AG04450 (cell line): ENCODE measurements at regions of chr2 and their contacts with region 1.

Region 1: DNA sequence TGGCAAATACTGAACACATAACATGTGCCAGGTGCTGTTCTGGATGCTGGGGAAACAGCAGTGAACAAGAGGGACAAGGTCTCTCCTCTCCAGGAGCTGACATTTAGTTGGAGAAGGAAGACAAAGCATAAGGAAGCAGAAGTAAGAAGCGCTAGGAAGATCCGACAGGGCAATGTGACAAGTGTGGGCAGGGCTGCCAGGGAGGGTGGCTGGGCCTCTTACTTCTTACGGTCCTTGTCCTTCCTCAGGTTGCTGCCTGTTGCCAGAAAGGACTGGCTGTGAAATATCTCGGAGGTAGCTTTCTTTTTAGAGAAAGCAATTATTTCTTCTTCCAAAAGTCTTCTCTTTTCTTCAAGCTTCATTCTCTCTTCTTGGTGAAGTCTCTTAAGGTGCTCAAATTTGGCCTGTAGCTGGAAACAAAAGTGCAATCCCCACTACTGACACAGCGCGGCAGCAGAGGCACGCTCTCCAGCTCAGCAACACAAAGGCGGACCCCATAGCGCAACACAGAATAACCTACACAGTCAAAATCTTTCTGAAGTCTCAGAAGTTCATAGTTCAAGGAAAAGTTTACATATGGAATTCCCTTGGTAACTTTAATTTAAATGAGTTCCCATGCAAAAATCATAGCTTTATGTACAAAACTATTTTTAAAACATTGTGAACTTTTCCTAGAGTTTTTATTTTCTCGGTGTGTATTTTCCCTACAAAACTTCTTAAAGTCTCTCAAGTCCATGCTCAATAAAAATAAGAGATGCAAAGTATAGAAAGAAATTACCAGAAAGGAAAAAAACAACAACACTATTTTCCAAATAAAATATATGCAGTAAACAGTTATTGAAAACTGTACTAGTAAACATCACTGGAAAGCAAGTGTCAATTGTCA is 67.7 kb downstream of the SEPTIN10 start:
- DNase-seq: peak; percentile 27
- H3K4me3 ChIP-seq: no peak overlapping the region
- H3K27ac ChIP-seq: no peak overlapping the region
- H3K27me3 ChIP-seq: no peaks in the 10 kb centered on the region
- CTCF ChIP-seq: peak; percentile 97

Region 2: GRCh38 chr2:109339519-109339966 is 206.5 kb before region 1 on chr2:
- CTCF ChIA-PET with region 1: no interaction called
- POLR2A ChIA-PET with region 1: no interaction called
- DNase-seq: peak; percentile 63
- H3K4me3 ChIP-seq: no peak overlapping the region
- H3K27ac ChIP-seq: peak overlapping the region; percentile 75
- H3K27me3 ChIP-seq: no peaks in the 10 kb centered on the region
- CTCF ChIP-seq: no peak

Region 3: GRCh38 chr2:109386004-109386695 is 159.9 kb before region 1 on chr2:
- CTCF ChIA-PET with region 1: no interaction called
- POLR2A ChIA-PET with region 1: no interaction called
- DNase-seq: no peak
- H3K4me3 ChIP-seq: no peak overlapping the region
- H3K27ac ChIP-seq: no peak overlapping the region
- H3K27me3 ChIP-seq: no peaks in the 10 kb centered on the region
- CTCF ChIP-seq: no peak

Region 4: DNA sequence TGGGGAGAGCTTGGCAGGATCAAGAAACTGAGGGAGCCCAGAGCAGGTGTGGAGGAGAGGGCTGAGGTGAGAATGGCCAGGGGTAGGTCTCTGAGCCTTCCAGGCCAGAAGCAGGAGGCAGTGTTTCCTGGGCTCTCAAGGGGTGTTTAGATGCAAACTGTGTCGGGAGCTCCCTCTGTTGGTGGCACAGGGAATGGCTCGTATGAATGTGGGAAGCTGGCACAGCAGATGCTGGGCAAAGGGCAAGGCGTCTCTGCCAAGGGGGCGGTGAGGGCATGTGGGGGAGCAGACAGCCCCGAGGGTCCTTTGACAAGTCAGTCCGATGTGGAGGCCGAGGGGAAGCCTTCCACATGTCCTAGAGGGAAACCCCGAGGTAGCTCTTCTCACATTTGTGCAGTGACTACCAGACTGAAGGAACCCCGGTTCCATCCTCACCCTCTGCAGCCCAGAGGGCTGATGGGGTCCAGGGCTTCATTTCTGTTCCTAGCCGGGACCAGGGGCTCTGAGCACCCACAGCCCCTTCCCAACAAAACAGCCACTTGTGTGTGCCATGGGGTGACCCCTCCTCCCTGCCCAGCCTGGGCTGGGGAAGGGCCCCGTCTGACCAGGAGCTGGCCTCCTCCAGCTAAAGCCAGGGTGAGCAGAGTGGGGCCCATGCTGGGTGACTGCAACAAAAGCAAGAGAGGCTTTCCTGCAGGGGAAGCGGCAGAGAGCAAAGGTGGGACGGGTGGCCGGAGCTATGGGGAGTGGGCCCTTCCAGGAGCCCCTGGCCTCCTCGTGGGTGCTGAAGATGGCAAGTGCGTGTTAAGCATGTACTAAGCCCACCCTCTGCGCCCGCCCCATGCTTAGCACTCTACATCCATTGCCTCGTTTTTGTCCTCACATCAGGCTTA is 35.7 kb before region 1 on chr2:
- CTCF ChIA-PET with region 1: interaction called, 13 read pairs
- POLR2A ChIA-PET with region 1: no interaction called
- DNase-seq: peak; percentile 33
- H3K4me3 ChIP-seq: no peak overlapping the region
- H3K27ac ChIP-seq: no peak overlapping the region
- H3K27me3 ChIP-seq: no peaks in the 10 kb centered on the region
- CTCF ChIP-seq: peak; percentile 98

Region 5: DNA sequence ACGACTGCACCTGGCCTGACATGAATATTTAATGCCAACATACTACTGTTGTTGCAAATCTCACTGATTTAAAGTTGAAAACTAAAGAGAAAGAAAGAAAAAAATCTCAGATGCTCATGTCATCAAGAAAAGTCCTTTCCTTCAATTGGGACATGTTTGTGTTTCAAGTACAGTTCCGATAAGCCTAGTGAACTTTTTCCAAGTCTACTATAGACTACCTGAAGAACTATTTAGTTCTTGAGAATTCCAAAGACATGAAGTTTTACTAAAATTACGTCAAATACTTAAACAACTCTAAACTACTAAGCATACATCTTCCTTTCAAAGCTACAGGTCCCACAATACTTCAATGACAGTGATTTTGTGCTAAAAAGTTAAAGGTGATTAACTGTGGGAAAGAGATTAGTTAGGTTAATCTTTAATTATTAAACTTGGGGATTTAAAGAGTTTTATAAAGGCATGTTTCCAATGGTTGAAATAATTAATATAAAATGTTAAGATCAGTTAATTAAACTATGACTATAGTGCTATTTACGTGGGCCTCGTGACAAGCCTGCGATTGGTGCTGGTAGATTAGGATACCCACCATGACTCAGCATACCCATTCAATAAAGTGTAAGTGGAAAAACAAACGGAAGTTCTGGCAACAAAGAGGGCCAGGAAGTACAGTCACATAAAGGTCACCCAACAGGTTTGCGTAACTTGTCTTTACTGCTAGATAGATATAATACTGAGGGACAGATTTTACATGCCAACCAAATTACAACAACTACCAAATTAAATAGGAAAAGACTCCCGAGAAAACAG is 12.2 kb after region 1 on chr2:
- CTCF ChIA-PET with region 1: interaction called, 25 read pairs
- POLR2A ChIA-PET with region 1: interaction called, 4 read pairs
- DNase-seq: no peak
- H3K4me3 ChIP-seq: no peak overlapping the region
- H3K27ac ChIP-seq: no peak overlapping the region
- H3K27me3 ChIP-seq: no peaks in the 10 kb centered on the region
- CTCF ChIP-seq: no peak

Region 6: DNA sequence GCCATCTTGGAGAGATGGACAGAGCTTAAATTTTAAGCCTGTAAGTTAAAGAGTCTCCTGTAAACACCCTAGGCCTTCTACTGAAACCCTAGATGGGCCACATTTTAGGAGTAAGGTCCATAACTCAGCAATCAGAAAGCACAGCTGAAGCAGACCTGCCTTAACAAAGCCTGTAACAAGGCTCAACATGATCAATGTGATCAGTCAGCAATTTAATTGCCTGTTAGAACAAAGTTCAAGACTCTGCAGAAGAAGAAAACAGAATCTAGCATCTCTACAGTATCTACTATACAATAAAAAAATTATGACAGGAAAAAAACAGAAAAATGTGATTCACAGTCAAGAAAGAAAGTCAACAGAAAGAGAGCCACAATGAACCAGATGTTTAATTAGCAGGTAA is 40.6 kb after region 1 on chr2:
- CTCF ChIA-PET with region 1: interaction called, 13 read pairs
- POLR2A ChIA-PET with region 1: no interaction called
- DNase-seq: no peak
- H3K4me3 ChIP-seq: no peak overlapping the region
- H3K27ac ChIP-seq: no peak overlapping the region
- H3K27me3 ChIP-seq: no peaks in the 10 kb centered on the region
- CTCF ChIP-seq: no peak

Region 7: DNA sequence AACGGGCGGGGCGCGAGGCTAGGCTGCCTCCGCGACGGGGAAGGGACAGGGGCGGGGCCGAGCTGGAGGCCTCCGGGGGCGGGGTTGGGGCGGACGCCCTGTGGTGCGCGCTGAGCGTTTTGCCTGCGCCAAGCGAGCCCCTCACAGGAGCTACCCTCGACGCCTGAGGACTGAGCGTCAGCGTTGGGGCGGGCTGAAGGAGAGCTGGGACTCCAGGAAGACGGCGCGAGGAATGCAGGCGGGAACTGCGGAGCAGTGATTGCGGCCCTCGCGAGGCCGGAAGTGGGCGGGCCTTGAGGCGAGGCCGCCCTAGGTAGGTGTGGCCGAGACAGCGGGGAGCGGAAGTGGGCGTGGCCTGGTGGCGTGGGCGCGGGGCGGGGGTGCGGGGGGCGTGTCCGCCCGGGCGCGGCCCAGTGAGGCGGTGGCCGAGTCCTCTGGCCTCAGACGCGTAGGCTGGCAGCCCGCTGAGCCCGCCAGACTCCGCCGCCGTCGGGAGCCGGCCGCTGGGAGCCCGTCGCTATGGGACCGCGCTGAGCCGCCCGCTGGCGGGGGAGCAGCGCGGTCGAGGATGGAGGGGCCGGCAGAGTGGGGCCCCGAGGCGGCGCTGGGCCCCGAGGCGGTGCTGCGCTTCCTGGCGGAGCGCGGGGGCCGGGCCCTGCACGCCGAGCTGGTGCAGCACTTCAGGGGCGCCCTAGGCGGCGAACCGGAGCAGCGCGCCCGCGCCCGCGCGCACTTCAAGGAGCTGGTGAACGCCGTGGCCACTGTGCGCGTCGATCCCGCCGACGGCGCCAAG is 68.0 kb after region 1 on chr2 and contains the starts of genes SEPTIN10 and SOWAHC:
- CTCF ChIA-PET with region 1: interaction called, 9 read pairs
- POLR2A ChIA-PET with region 1: interaction called, 13 read pairs
- DNase-seq: peak; percentile 99
- H3K4me3 ChIP-seq: peak within 1 kb of the TSS; percentile 80
- H3K27ac ChIP-seq: peak within 1 kb of the TSS; percentile 79
- H3K27me3 ChIP-seq: no peaks in the 10 kb centered on the region
- CTCF ChIP-seq: no peak
- polyA plus RNA-seq, gene SEPTIN10: 81.6 and 105 TPM in 2 replicates
- polyA plus RNA-seq, gene SOWAHC: 3.9 and 4.6 TPM in 2 replicates

Region 8: GRCh38 chr2:109715313-109715805 is 169.3 kb after region 1 on chr2:
- CTCF ChIA-PET with region 1: interaction called, 16 read pairs
- POLR2A ChIA-PET with region 1: no interaction called
- DNase-seq: no peak
- H3K4me3 ChIP-seq: no peak overlapping the region
- H3K27ac ChIP-seq: no peak overlapping the region
- H3K27me3 ChIP-seq: peaks cover 34% of the 10 kb centered on the region
- CTCF ChIP-seq: peak; percentile 37

Region 9: GRCh38 chr2:109736177-109736827 is 190.2 kb after region 1 on chr2:
- CTCF ChIA-PET with region 1: interaction called, 216 read pairs
- POLR2A ChIA-PET with region 1: interaction called, 6 read pairs
- DNase-seq: peak; percentile 27
- H3K4me3 ChIP-seq: no peak overlapping the region
- H3K27ac ChIP-seq: no peak overlapping the region
- H3K27me3 ChIP-seq: no peaks in the 10 kb centered on the region
- CTCF ChIP-seq: peak; percentile 77